ENCODE measurements at regions of chr5 and their contacts with region 1.

Region 1: DNA sequence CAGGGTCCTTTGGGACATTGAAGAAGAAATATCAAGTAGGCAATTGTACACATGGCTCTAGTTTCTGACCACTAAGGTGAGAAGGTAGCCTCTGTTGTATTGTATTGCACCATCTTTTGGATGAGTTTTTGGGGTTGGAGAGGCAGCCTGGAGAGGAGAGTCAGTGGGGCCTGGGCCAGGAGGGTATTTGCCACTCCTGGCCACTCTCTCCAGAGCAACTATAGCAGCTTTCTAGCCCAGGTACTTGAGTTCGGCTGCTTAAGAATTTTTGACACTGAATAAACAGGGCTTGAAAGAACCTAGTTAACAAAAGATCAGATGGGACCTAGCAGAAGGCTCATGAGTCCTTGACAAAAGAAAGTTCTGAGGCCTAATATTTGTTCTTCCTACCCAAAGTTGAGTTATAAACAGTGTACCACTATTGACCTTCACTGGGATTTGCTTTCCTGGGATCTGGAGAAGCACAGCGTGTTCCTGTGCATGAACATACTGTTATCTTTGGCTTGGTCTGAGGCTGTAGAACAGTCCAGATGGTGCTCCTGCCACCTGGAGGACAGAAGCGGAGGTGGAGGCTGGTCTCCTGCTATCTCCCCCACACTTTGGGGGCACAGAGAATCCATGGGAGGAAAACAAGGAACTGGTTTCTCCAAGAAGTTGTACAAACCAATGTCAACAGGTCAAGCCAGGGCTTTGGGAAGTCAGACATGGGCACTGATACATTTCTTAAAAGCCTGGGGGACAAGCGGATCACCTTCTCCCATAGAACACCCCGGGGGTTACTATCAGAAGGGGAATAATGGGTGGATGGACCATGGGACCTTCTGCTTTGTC is 110.4 kb upstream of the LIFR start:
- DNase-seq: peak; percentile 36 to 78 (median 64)
- ATAC-seq: peak; percentile 94
- H3K4me3 ChIP-seq: no peak overlapping the region
- H3K27ac ChIP-seq: peak overlapping the region; percentile 53
- H3K4me1 ChIP-seq: peaks cover 12% of the 10 kb centered on the region
- H3K27me3 ChIP-seq: no peaks in the 10 kb centered on the region

Region 2: GRCh38 chr5:38078161-38078560 is 588.7 kb before region 1 on chr5:
- intact Hi-C with region 1: no loop called
- DNase-seq: no peak
- ATAC-seq: no peak
- H3K4me3 ChIP-seq: no peak overlapping the region
- H3K27ac ChIP-seq: no peak overlapping the region
- H3K4me1 ChIP-seq: no peaks in the 10 kb centered on the region
- H3K27me3 ChIP-seq: no peaks in the 10 kb centered on the region

Region 3: DNA sequence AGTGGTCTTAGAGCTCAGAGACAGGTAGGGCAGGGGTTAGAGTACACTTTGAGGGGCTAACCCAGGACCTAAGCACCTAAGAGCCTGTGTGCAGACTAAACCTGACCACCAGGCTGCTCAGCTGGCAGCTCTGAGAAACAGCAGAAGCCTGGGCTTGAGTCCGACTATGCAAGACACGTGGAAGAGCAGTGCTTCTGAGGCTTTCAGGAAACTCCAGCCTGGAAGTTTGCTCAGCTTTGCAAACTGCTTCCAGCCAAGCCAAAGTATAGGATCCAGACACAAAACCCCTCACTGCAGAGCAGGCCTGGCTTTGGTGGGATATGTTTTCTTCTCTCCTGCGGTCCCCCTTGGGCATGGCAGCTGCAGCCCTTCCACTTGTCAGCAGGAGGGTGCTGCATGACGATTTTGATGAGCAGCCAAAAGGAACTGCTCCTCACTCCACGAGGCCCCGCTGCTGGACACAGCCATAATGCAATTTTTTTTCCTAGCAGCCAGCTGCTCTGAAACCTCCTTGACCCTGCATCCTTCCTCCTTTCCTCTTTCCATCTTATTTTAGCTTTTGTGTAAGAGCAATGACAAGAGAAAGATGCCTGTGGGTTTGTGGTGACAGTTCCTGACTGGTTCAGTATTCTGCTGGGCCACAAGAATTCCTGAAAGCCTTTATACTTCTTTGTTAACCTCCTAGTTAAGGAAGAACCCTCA is 233.6 kb before region 1 on chr5:
- intact Hi-C with region 1: loop called in 1 of 4 experiments (anchors 10 kb)
- DNase-seq: peak; percentile 61 to 84 (median 83)
- ATAC-seq: peak; percentile 83 to 92
- H3K4me3 ChIP-seq: no peak overlapping the region
- H3K27ac ChIP-seq: no peak overlapping the region
- H3K4me1 ChIP-seq: peaks cover 4% of the 10 kb centered on the region
- H3K27me3 ChIP-seq: no peaks in the 10 kb centered on the region

Region 4: DNA sequence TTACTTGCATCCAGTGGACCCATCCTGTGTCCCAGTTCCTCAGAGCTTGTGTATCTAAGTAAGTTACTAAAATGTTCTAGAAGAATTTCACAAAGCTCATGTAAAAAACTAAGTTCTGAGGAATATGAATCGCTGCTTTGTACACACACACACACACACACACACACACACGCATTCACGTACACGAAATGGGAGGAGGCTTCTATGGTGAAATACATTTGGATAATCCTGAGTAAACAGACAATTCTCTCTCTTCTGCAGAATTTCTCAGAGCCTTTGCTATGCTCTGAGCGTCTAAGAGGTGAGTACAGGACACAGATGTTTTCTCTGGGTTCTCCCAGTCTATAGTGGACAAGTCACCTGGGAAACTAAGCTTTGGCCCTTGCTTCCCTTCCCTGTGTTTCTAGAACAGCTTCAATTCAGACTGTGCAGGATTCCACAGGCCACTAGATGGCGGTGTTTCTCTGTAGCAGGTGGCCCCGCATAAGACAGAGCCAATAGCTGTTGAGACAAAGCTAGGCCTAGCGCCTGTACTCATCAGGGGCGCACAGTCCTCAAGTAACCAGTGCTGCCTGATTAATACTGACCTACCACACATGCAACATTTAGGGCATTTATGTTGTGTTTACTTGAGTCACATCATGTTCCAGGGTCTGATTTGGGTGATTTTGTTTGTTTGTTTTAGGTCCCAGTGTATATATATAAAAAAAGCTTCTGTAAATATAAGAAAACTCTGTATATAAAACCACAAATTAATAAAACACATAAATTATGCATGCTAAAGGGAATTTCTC is 225.2 kb before region 1 on chr5:
- intact Hi-C with region 1: loop called in 2 of 4 experiments (anchors 5 to 10 kb)
- DNase-seq: peak; percentile 87 to 94 (median 87)
- ATAC-seq: peak; percentile 92 to 93
- H3K4me3 ChIP-seq: no peak overlapping the region
- H3K27ac ChIP-seq: no peak overlapping the region
- H3K4me1 ChIP-seq: no peaks in the 10 kb centered on the region
- H3K27me3 ChIP-seq: no peaks in the 10 kb centered on the region

Region 5: GRCh38 chr5:38556599-38557305 is 110.1 kb before region 1 on chr5 and contains the start of gene LIFR:
- intact Hi-C with region 1: loop called in 3 of 4 experiments (anchors 5 to 10 kb)
- DNase-seq: peak; percentile 87 to 95 (median 94)
- ATAC-seq: peak; percentile 90 to 91
- H3K4me3 ChIP-seq: peak within 1 kb of the TSS; percentile 99
- H3K27ac ChIP-seq: peak within 1 kb of the TSS; percentile 97
- H3K4me1 ChIP-seq: peaks cover 4% of the 10 kb centered on the region
- H3K27me3 ChIP-seq: no peaks in the 10 kb centered on the region
- total RNA-seq, gene LIFR: 45.3 to 66.9 (median 63.4) TPM

Region 6: GRCh38 chr5:38809388-38810359 is 142.8 kb after region 1 on chr5:
- intact Hi-C with region 1: loop called in 3 of 4 experiments (anchors 10 kb)
- DNase-seq: peak; percentile 81 to 94 (median 89)
- ATAC-seq: peak; percentile 87 to 88
- H3K4me3 ChIP-seq: no peak overlapping the region
- H3K27ac ChIP-seq: peak overlapping the region; percentile 13
- H3K4me1 ChIP-seq: peaks cover 3% of the 10 kb centered on the region
- H3K27me3 ChIP-seq: no peaks in the 10 kb centered on the region

Region 7: GRCh38 chr5:38821679-38822078 is 154.8 kb after region 1 on chr5:
- intact Hi-C with region 1: no loop called
- DNase-seq: peak in 1 of 3 donors; percentile 41
- ATAC-seq: peak in 1 of 2 donors; percentile 54
- H3K4me3 ChIP-seq: no peak overlapping the region
- H3K27ac ChIP-seq: no peak overlapping the region
- H3K4me1 ChIP-seq: no peaks in the 10 kb centered on the region
- H3K27me3 ChIP-seq: no peaks in the 10 kb centered on the region

Region 8: DNA sequence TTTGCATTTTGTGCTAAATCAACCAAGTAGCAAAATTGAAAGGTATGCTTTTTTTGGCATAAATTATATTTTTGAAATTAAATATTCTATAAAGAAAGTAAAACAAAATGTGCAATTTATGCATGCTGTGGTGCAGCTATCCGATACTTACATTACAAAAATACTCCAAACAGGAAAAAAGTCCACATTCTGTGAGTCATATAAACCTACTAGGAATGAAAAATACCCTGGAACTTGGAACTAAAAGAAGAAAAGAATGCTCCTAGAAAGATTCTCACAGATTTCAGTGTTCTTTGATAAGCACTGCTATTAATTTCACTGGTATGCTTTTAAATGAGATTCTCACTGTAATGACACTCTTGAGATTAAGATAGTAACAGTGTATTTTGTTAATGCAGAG is 271.5 kb after region 1 on chr5:
- intact Hi-C with region 1: no loop called
- DNase-seq: no peak
- ATAC-seq: no peak
- H3K4me3 ChIP-seq: no peak overlapping the region
- H3K27ac ChIP-seq: no peak overlapping the region
- H3K4me1 ChIP-seq: no peaks in the 10 kb centered on the region
- H3K27me3 ChIP-seq: no peaks in the 10 kb centered on the region

Measured in right cardiac atrium (tissue), 5 donors.